Naive thymus-derived CD4-positive, alpha-beta T cell (primary cell): ENCODE measurements at regions of chr17 and their contacts with region 1.

Region 1: GRCh38 chr17:49952209-49952911 is 16.6 kb upstream of the DLX4 start:
- DNase-seq: peak; percentile 62 to 82 (median 77)
- ATAC-seq: peak; percentile 95
- H3K4me3 ChIP-seq: no peak overlapping the region
- H3K4me3 Mint-ChIP-seq: no peak overlapping the region
- H3K27ac ChIP-seq: no peak overlapping the region
- H3K27ac Mint-ChIP-seq: no peak overlapping the region
- H3K4me1 ChIP-seq: no peaks in the 10 kb centered on the region
- H3K4me1 Mint-ChIP-seq: peaks cover 0 to 2% (median 0%) of the 10 kb centered on the region in 7 donors
- H3K27me3 ChIP-seq: no peaks in the 10 kb centered on the region
- H3K27me3 Mint-ChIP-seq: peaks cover 38 to 48% (median 40%) of the 10 kb centered on the region in 5 donors

Region 2: GRCh38 chr17:49798182-49798581 is 154.2 kb before region 1 on chr17:
- CTCF ChIA-PET with region 1: no interaction called
- POLR2A ChIA-PET with region 1: no interaction called
- intact Hi-C with region 1: no loop called
- DNase-seq: no peak
- ATAC-seq: no peak
- H3K4me3 ChIP-seq: no peak overlapping the region
- H3K4me3 Mint-ChIP-seq: peak overlapping the region in 7 of 10 donors; percentile 4 to 44 (median 33)
- H3K27ac ChIP-seq: no peak overlapping the region
- H3K27ac Mint-ChIP-seq: peak overlapping the region in 6 of 9 donors; percentile 18 to 56 (median 27)
- H3K4me1 ChIP-seq: peaks cover 10 to 21% of the 10 kb centered on the region in 2 donors
- H3K4me1 Mint-ChIP-seq: peaks cover 30 to 63% (median 57%) of the 10 kb centered on the region in 7 donors
- H3K27me3 ChIP-seq: no peaks in the 10 kb centered on the region
- H3K27me3 Mint-ChIP-seq: no peaks in the 10 kb centered on the region

Region 3: GRCh38 chr17:49861150-49861892 is 91.0 kb before region 1 on chr17:
- CTCF ChIA-PET with region 1: interaction called, 3 read pairs
- POLR2A ChIA-PET with region 1: no interaction called
- intact Hi-C with region 1: loop called in 1 of 2 experiments (anchors 1 kb)
- DNase-seq: peak in 8 of 9 donors; percentile 19 to 60 (median 42)
- ATAC-seq: peak; percentile 76
- H3K4me3 ChIP-seq: no peak overlapping the region
- H3K4me3 Mint-ChIP-seq: no peak overlapping the region
- H3K27ac ChIP-seq: no peak overlapping the region
- H3K27ac Mint-ChIP-seq: peak overlapping the region in 1 of 9 donors; percentile 4
- H3K4me1 ChIP-seq: no peaks in the 10 kb centered on the region
- H3K4me1 Mint-ChIP-seq: peaks cover 0 to 7% (median 5%) of the 10 kb centered on the region in 7 donors
- H3K27me3 ChIP-seq: no peaks in the 10 kb centered on the region
- H3K27me3 Mint-ChIP-seq: peaks cover 0 to 13% (median 6%) of the 10 kb centered on the region in 5 donors

Region 4: GRCh38 chr17:49880291-49881053 is 71.9 kb before region 1 on chr17:
- CTCF ChIA-PET with region 1: interaction called, 3 read pairs
- POLR2A ChIA-PET with region 1: no interaction called
- intact Hi-C with region 1: loop called (anchors 1 to 5 kb)
- DNase-seq: peak; percentile 31 to 77 (median 58)
- ATAC-seq: peak; percentile 95
- H3K4me3 ChIP-seq: no peak overlapping the region
- H3K4me3 Mint-ChIP-seq: peak overlapping the region in 8 of 10 donors; percentile 21 to 74 (median 44)
- H3K27ac ChIP-seq: no peak overlapping the region
- H3K27ac Mint-ChIP-seq: no peak overlapping the region
- H3K4me1 ChIP-seq: peaks cover 3 to 7% of the 10 kb centered on the region in 2 donors
- H3K4me1 Mint-ChIP-seq: peaks cover 0 to 7% (median 5%) of the 10 kb centered on the region in 7 donors
- H3K27me3 ChIP-seq: peaks cover 4 to 9% of the 10 kb centered on the region in 2 donors
- H3K27me3 Mint-ChIP-seq: peaks cover 20 to 52% (median 43%) of the 10 kb centered on the region in 5 donors

Region 5: DNA sequence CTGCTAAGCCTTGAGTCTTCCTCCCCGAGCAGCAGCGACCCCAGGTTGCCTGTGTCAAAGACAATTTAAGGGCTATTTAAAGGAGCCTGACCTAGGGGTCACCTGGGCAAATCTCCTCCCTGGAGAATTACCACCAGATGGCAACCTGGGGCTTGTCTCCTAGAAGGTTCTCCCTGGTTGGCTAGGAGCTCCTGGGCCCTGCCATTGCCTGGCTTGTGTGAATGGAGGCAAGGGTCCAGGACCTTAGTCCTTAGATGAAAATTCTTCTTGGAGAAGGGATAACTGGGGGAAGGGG is 53.2 kb before region 1 on chr17:
- CTCF ChIA-PET with region 1: no interaction called
- POLR2A ChIA-PET with region 1: no interaction called
- intact Hi-C with region 1: no loop called
- DNase-seq: no peak
- ATAC-seq: no peak
- H3K4me3 ChIP-seq: no peak overlapping the region
- H3K4me3 Mint-ChIP-seq: no peak overlapping the region
- H3K27ac ChIP-seq: no peak overlapping the region
- H3K27ac Mint-ChIP-seq: no peak overlapping the region
- H3K4me1 ChIP-seq: no peaks in the 10 kb centered on the region
- H3K4me1 Mint-ChIP-seq: peaks cover 0 to 3% (median 0%) of the 10 kb centered on the region in 7 donors
- H3K27me3 ChIP-seq: peaks cover 5 to 12% of the 10 kb centered on the region in 2 donors
- H3K27me3 Mint-ChIP-seq: peaks cover 46 to 72% (median 57%) of the 10 kb centered on the region in 5 donors

Region 6: DNA sequence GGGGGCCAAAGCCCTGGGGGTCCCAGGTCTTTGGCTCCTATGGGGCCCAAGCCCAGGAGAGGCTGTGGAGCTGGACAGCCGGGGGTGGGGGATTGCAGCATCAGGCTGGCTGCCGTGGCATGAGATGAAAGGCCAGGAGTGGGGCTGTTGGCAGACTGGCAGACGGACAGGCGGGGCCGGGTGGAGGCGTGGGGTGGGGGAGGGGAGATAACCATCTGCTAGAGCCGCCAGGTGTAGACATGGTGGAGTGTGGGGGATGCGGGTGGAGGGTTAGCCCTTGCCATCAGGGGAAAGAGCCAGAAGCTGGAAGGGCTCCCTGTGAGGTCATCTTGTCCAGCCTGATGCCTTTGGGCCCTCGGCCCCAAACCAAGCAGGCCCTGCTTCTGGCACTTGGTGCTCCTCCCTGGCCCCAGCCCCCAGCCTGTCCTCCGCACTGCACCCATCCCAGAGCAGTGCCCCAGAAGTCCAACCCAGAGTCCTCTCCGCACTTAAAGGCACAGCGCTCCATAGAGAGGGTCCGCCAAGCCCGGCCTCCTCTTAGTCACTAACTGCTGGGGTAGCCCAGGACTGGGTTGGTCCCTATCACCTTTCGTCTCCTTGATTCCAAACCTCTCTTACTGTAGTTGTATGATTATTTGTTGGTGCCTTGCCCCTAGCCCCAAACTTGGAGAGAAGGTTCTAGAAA is 16.7 kb before region 1 on chr17:
- CTCF ChIA-PET with region 1: no interaction called
- POLR2A ChIA-PET with region 1: no interaction called
- intact Hi-C with region 1: loop called in 1 of 2 experiments (anchors 1 kb)
- DNase-seq: no peak
- ATAC-seq: no peak
- H3K4me3 ChIP-seq: no peak overlapping the region
- H3K4me3 Mint-ChIP-seq: no peak overlapping the region
- H3K27ac ChIP-seq: no peak overlapping the region
- H3K27ac Mint-ChIP-seq: no peak overlapping the region
- H3K4me1 ChIP-seq: no peaks in the 10 kb centered on the region
- H3K4me1 Mint-ChIP-seq: peaks cover 0 to 6% (median 0%) of the 10 kb centered on the region in 7 donors
- H3K27me3 ChIP-seq: no peaks in the 10 kb centered on the region
- H3K27me3 Mint-ChIP-seq: peaks cover 16 to 42% (median 27%) of the 10 kb centered on the region in 5 donors

Region 7: DNA sequence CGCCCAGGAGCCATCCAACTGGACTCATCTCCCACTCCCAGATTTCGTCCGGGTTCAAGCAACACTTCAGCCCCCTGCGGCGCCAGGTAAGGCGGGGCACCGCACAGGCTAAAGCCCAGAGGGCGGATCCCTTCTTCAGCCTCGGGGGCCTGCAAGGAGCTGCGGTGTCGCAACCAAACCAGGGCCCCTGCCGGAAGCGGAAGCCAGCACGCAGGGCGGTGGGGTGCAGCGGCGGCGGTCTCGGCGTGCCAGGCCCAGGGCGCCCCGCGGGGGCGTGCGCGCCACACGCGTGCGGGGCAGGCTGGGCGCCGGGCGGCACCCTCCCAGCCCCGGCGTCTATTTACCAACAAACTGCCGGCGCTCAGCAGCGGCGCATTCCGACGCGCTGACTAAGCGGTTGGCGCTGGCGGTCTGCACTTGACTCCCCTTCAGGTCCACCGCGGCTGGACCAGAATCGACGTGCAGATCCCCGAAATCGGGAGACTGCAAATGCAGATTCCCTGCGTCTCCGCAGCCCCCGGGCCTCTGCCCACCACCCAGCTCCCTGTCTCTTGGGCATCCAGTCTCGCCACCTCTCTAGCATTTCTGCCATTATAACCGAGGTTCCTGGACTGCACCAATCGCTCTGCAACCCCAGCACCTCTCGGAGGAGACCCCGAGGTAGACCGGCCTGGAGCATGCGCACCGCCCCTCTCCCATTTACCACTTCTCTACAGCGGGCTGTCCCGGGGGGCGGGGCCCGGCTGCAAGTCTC is 16.2 kb after region 1 on chr17:
- CTCF ChIA-PET with region 1: interaction called, 7 read pairs
- POLR2A ChIA-PET with region 1: interaction called, 3 read pairs
- intact Hi-C with region 1: loop called in 1 of 2 experiments (anchors 1 kb)
- DNase-seq: peak; percentile 46 to 77 (median 71)
- ATAC-seq: peak; percentile 83
- H3K4me3 ChIP-seq: peak overlapping the region; percentile 81
- H3K4me3 Mint-ChIP-seq: peak overlapping the region; percentile 82 to 94 (median 90)
- H3K27ac ChIP-seq: no peak overlapping the region
- H3K27ac Mint-ChIP-seq: peak overlapping the region in 7 of 9 donors; percentile 47 to 91 (median 65)
- H3K4me1 ChIP-seq: peaks cover 9 to 40% of the 10 kb centered on the region in 2 donors
- H3K4me1 Mint-ChIP-seq: peaks cover 25 to 79% (median 57%) of the 10 kb centered on the region in 7 donors
- H3K27me3 ChIP-seq: peaks cover 11 to 41% of the 10 kb centered on the region in 2 donors
- H3K27me3 Mint-ChIP-seq: peaks cover 63 to 93% (median 72%) of the 10 kb centered on the region in 5 donors